ENCODE measurements at regions of chr7 and their contacts with region 1.

Region 1: GRCh38 chr7:140304191-140304799 is 94.0 kb downstream of the SLC37A3 start:
- DNase-seq: peak; percentile 62
- H3K4me3 Mint-ChIP-seq: no peak overlapping the region
- H3K27ac Mint-ChIP-seq: peak overlapping the region; percentile 88
- H3K4me1 Mint-ChIP-seq: peaks cover 16% of the 10 kb centered on the region
- H3K27me3 Mint-ChIP-seq: no peaks in the 10 kb centered on the region

Region 2: GRCh38 chr7:140230861-140231770 is 73.2 kb before region 1 on chr7:
- CTCF ChIA-PET with region 1: no interaction called
- POLR2A ChIA-PET with region 1: no interaction called
- intact Hi-C with region 1: loop called (anchors 1 kb)
- DNase-seq: peak; percentile 78
- H3K4me3 Mint-ChIP-seq: peak overlapping the region; percentile 79
- H3K27ac Mint-ChIP-seq: peak overlapping the region; percentile 99
- H3K4me1 Mint-ChIP-seq: peaks cover 32% of the 10 kb centered on the region
- H3K27me3 Mint-ChIP-seq: no peaks in the 10 kb centered on the region

Region 3: DNA sequence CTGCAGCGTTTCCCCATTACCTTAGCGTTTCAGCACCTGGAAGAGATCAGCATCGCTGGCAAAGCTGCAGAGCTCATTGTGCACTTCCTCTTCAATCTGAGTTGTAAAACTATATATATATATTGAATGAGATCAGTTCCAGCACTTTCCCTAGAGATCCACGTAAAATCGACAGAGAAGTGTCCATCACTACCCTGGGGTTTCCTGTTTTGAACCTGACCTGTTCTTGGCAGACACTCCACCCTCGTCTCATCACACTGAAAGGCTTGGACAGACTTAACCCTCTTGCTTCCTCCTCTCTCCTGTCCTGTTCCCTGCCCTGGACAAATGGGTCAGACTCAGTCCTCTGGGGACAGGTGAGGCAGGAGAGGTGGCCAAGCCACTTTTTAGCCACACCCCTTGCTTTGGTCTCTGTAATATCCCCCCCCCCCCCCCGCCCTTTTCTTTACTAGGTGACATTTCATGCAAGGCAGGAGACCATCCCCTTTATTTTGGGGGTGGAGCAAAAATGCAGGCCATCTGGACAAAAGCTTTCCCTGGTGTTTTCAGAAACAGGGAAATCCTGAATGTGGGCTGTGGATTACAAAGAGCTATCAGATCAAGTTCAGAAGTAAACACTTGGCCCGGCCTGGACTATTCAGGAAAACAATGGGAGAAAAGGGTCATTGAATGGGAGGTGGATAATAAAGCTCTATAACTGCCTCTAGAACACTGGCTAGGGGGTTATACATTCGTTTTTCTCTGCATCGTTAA is 43.8 kb before region 1 on chr7:
- CTCF ChIA-PET with region 1: interaction called, 3 read pairs
- POLR2A ChIA-PET with region 1: no interaction called
- intact Hi-C with region 1: loop called (anchors 5 kb)
- DNase-seq: no peak
- H3K4me3 Mint-ChIP-seq: no peak overlapping the region
- H3K27ac Mint-ChIP-seq: no peak overlapping the region
- H3K4me1 Mint-ChIP-seq: peaks cover 19% of the 10 kb centered on the region
- H3K27me3 Mint-ChIP-seq: no peaks in the 10 kb centered on the region